H1 (cell line): ENCODE measurements at regions of chr6 and their contacts with region 1.

Region 1: DNA sequence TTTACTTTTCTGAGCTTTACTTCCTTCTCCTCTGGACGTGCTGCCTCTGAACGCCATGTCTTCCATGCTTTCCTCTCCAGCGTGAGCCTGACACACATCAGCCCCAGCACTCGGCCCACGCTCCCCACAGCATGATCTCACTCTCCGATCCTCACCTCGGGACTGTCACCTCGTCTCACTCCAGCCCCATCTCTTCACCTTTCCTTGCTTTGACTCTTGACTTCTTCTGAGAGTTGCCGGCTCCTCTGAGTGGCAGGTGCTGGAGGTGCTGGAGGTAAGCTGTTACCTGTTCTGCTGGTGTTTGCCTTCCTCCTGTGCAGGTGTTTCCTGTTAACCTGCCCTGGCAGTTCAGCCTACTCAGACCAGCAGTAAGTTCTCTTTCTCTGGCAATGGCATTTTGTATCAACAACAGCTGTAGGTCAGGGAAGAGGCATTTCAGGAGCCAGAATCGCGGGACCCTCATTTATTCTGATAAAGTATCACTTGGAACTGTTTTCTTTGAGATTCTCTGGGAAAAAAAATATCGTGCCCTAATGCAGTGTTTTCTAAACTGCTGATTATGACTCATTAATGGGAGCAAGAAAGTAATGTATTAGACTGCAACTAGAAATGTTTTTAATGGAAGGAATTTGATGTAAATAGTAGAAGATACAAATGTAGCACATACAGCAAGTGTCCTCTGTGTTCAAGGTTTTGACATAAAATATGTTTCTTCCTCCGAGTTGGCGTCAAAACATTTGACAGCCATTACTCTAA is 106.5 kb downstream of the ARID1B start:
- DNase-seq: no peak
- H3K4me3 ChIP-seq: no peak overlapping the region
- H3K27ac ChIP-seq: peak overlapping the region; percentile 14; the same call in 1 of the 2 replicates
- H3K4me1 ChIP-seq: peaks cover 2 to 34% (median 21%) of the 10 kb centered on the region in 4 experiments; a peak in 6 of 7 replicates
- H3K27me3 ChIP-seq: no peaks in the 10 kb centered on the region
- CTCF ChIP-seq: no peak
- EP300 ChIP-seq: no peak
- POLR2A ChIP-seq: no peak
- RAD21 ChIP-seq: peak in 1 of 2 experiments; percentile 19; a peak in 1 of 4 replicates

Region 2: GRCh38 chr6:156899532-156900135 is 16.0 kb after region 1 on chr6:
- CTCF ChIA-PET with region 1: interaction called, 11 read pairs
- POLR2A ChIA-PET with region 1: interaction called, 5 read pairs
- DNase-seq: no peak
- H3K4me3 ChIP-seq: no peak overlapping the region
- H3K27ac ChIP-seq: no peak overlapping the region
- H3K4me1 ChIP-seq: peaks cover 0 to 7% (median 2%) of the 10 kb centered on the region in 4 experiments; a peak in 1 of 7 replicates
- H3K27me3 ChIP-seq: no peaks in the 10 kb centered on the region
- CTCF ChIP-seq: peak in 2 of 3 experiments; percentile 22 to 25; a peak in 2 of 4 replicates
- EP300 ChIP-seq: no peak
- POLR2A ChIP-seq: no peak
- RAD21 ChIP-seq: peak in 1 of 2 experiments; percentile 34; a peak in 3 of 4 replicates

Region 3: GRCh38 chr6:157094038-157094437 is 210.4 kb after region 1 on chr6:
- CTCF ChIA-PET with region 1: no interaction called
- POLR2A ChIA-PET with region 1: no interaction called
- DNase-seq: no peak
- H3K4me3 ChIP-seq: no peak overlapping the region
- H3K27ac ChIP-seq: no peak overlapping the region
- H3K4me1 ChIP-seq: peaks cover 6 to 21% (median 18%) of the 10 kb centered on the region in 4 experiments
- H3K27me3 ChIP-seq: no peaks in the 10 kb centered on the region
- CTCF ChIP-seq: no peak
- EP300 ChIP-seq: no peak
- POLR2A ChIP-seq: no peak
- RAD21 ChIP-seq: no peak